ENCODE measurements at regions of chr16 and their contacts with region 1.

Region 1: GRCh38 chr16:67246934-67247697 is at the start of gene FHOD1:
- DNase-seq: peak; percentile 99
- ATAC-seq: peak; percentile 61
- H3K4me3 Mint-ChIP-seq: peak within 1 kb of the TSS; percentile 89
- H3K27ac Mint-ChIP-seq: peak within 1 kb of the TSS; percentile 85
- H3K4me1 Mint-ChIP-seq: peaks cover 34% of the 10 kb centered on the region
- H3K27me3 Mint-ChIP-seq: peaks cover 40% of the 10 kb centered on the region
- CTCF ChIP-seq: no peak
- total RNA-seq, gene FHOD1: 68.9 to 81.3 TPM (median 71.5 TPM) in 3 replicates

Region 2: DNA sequence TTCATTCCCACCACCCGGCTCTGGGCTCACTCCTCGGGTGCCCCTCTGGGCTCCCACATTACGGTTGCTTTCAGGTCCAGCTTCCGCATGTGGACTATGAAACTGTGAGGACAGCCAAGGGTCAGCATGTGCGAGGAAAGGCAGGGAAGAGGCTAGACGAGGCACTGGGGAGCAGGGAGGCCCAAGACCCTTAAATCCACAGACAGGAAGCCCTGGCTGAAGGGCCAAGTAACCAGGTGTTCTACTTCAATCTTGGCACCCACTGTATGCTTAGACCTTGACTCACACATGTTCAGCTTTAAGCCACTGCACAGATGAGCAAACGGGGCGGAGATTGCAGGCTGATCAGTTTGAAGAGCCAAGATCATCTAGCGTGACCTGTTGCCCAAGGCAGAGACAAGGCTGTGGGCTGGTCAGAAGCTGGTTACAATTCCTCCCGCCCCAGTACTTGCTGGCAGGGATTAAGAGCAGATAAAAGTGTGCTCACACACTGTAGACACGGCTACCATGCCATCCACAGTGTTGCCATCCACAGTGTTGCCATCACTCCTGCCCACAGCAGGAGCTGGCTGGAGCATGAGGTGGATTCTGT is 258.8 kb before region 1 on chr16 and contains the start of gene CES4A:
- CTCF ChIA-PET with region 1: no interaction called
- POLR2A ChIA-PET with region 1: no interaction called
- DNase-seq: no peak
- ATAC-seq: no peak
- H3K4me3 Mint-ChIP-seq: no peak within 1 kb of the TSS
- H3K27ac Mint-ChIP-seq: no peak within 1 kb of the TSS
- H3K4me1 Mint-ChIP-seq: no peaks in the 10 kb centered on the region
- H3K27me3 Mint-ChIP-seq: peaks cover 12% of the 10 kb centered on the region
- CTCF ChIP-seq: no peak
- total RNA-seq, gene CES4A: 0.57 to 0.89 TPM (median 0.61 TPM) in 3 replicates

Region 3: GRCh38 chr16:67183627-67184328 is 63.3 kb before region 1 on chr16 and contains the start of gene MATCAP1:
- CTCF ChIA-PET with region 1: interaction called, 17 read pairs
- POLR2A ChIA-PET with region 1: interaction called, 3 read pairs
- DNase-seq: peak; percentile 94
- ATAC-seq: peak; percentile 90
- H3K4me3 Mint-ChIP-seq: peak within 1 kb of the TSS; percentile 82
- H3K27ac Mint-ChIP-seq: no peak within 1 kb of the TSS
- H3K4me1 Mint-ChIP-seq: peaks cover 20% of the 10 kb centered on the region
- H3K27me3 Mint-ChIP-seq: peaks cover 31% of the 10 kb centered on the region
- CTCF ChIP-seq: no peak
- total RNA-seq, gene MATCAP1: 40.8 to 54.3 TPM (median 50.5 TPM) in 3 replicates

Region 4: GRCh38 chr16:67226804-67227557 is 20.1 kb before region 1 on chr16 and contains the start of gene TMEM208:
- CTCF ChIA-PET with region 1: interaction called, 40 read pairs
- POLR2A ChIA-PET with region 1: interaction called, 18 read pairs
- DNase-seq: peak; percentile 100
- ATAC-seq: peak; percentile 99
- H3K4me3 Mint-ChIP-seq: peak within 1 kb of the TSS; percentile 97
- H3K27ac Mint-ChIP-seq: peak within 1 kb of the TSS; percentile 98
- H3K4me1 Mint-ChIP-seq: peaks cover 15% of the 10 kb centered on the region
- H3K27me3 Mint-ChIP-seq: peaks cover 28% of the 10 kb centered on the region
- CTCF ChIP-seq: no peak
- total RNA-seq, gene TMEM208: 37.4 to 48.4 TPM (median 43.1 TPM) in 3 replicates

Region 5: DNA sequence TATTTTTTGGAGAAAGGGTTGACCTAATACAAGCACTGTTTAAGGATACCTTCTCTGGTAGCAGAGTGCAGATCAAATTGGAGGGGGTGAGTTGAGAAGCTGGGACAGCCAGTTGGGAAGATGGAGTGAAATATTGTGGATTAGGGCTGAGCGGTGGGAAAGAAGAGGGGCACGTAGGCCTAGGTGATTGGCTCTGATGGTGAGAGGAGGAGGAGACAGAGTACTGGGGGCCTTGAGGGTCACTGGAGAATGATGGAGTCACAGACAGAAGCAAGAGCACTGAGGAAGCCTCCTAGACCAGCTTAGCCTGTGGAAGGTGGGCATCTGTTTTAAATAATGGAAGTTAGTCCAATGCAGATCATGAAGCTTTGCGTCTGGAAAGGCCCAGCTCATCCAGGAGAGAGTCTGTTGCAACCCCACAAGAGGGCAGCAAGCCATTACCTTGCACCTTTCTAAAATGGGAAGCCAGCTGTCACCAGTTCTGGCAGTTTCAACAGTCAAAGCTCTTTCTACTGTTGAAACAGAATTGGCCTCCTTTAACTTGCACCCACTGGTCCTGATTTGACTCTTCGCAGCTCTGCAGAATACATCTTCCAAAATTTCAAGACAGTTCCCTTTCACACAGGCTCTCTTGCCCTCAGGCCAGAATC is 13.4 kb after region 1 on chr16:
- CTCF ChIA-PET with region 1: interaction called, 40 read pairs
- POLR2A ChIA-PET with region 1: interaction called, 14 read pairs
- DNase-seq: no peak
- ATAC-seq: peak; percentile 67
- H3K4me3 Mint-ChIP-seq: no peak overlapping the region
- H3K27ac Mint-ChIP-seq: no peak overlapping the region
- H3K4me1 Mint-ChIP-seq: peaks cover 4% of the 10 kb centered on the region; the same call in 1 of the 2 replicates
- H3K27me3 Mint-ChIP-seq: no peaks in the 10 kb centered on the region
- CTCF ChIP-seq: no peak

Region 6: DNA sequence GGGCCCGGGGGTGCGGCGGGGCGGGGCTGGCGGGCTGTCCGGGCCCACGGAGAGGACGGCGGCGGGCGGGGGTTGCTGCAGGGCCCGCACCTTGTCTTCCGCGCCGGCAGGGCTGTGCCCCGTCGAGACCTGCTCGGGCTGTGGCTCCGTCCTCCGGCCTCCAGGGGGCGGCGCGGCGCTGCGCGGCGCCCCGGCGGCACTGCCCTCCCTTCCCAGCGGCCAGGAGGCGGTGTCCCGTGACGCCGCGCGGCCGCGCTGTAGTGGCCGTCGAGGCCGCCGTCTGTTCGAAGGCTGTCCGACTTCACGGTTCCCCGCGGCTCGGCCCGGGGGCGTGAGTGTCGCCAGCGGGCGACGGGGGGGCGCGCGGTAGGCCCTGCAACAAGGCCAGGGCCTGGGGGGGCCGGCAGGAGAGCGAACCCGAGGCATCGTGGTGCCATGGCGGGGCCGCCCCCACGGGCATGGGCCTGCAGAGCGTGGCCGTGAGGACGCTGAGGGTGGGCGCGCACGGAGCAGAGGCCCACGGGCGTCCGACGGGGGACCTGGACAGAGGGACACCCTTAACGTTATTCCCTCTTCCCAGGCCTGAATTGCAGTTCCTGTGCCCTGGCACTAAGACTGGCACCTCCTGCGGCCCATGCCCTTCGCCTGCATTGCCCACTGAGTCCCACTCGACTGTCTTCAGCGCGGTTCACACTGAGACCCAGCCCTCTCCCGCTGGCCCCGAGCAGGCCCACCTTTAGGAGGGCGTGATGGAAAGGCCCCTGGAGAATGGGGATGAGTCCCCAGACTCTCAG is 32.4 kb after region 1 on chr16 and contains the start of gene PLEKHG4:
- CTCF ChIA-PET with region 1: interaction called, 57 read pairs
- POLR2A ChIA-PET with region 1: interaction called, 4 read pairs
- DNase-seq: peak; percentile 81
- ATAC-seq: peak; percentile 89
- H3K4me3 Mint-ChIP-seq: peak within 1 kb of the TSS; percentile 69
- H3K27ac Mint-ChIP-seq: no peak within 1 kb of the TSS
- H3K4me1 Mint-ChIP-seq: peaks cover 2% of the 10 kb centered on the region; the same call in 1 of the 2 replicates
- H3K27me3 Mint-ChIP-seq: peaks cover 23% of the 10 kb centered on the region
- CTCF ChIP-seq: peak; percentile 83
- total RNA-seq, gene PLEKHG4: 5.9 to 16.7 TPM (median 15.0 TPM) in 3 replicates

Region 7: GRCh38 chr16:67393035-67393787 is 146.1 kb after region 1 on chr16 and contains the start of gene TPPP3:
- CTCF ChIA-PET with region 1: interaction called, 12 read pairs
- POLR2A ChIA-PET with region 1: no interaction called
- DNase-seq: peak; percentile 90
- ATAC-seq: peak; percentile 56
- H3K4me3 Mint-ChIP-seq: peak within 1 kb of the TSS; percentile 66
- H3K27ac Mint-ChIP-seq: no peak within 1 kb of the TSS
- H3K4me1 Mint-ChIP-seq: peaks cover 20% of the 10 kb centered on the region
- H3K27me3 Mint-ChIP-seq: peaks cover 56% of the 10 kb centered on the region
- CTCF ChIP-seq: peak; percentile 25; the same call in 1 of the 2 replicates
- total RNA-seq, gene TPPP3: 0.57 to 0.74 TPM (median 0.64 TPM) in 3 replicates

Measured in WTC11 (cell line).